ENCODE measurements at regions of chr15 and their contacts with region 1.

Region 1: DNA sequence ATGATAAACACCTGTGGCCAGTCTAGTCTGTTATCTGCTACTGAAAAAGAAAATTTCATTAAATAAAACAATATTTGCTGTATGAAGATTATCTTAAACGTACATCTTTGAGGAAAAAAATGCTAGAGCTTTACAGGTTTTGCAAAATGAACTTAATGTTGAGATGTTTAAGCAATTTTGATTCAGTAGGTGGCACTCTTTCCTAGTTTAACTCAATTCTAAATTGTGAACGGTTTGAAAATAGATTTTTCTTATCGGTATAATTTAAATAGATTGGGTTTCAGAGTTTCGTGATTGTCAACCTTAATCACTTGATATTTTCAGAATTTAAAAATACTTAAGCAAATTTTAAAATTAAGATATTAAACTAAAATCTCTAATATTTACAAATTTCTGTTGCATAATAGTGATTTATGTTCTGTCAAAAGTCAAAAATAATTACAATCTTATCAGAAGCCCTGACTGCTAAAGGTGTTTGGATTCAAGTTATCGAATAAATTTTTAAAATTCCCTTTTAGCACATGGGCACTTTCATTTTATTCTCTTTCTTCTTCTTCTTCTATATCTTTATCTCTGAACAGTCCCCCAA is 7.0 kb upstream of the RNF111 start:
- DNase-seq: no peak
- H3K4me3 Mint-ChIP-seq: no peak overlapping the region
- H3K27ac Mint-ChIP-seq: no peak overlapping the region
- H3K4me1 Mint-ChIP-seq: peaks cover 9% of the 10 kb centered on the region
- H3K27me3 Mint-ChIP-seq: no peaks in the 10 kb centered on the region
- CTCF ChIP-seq: peak; percentile 17

Region 2: DNA sequence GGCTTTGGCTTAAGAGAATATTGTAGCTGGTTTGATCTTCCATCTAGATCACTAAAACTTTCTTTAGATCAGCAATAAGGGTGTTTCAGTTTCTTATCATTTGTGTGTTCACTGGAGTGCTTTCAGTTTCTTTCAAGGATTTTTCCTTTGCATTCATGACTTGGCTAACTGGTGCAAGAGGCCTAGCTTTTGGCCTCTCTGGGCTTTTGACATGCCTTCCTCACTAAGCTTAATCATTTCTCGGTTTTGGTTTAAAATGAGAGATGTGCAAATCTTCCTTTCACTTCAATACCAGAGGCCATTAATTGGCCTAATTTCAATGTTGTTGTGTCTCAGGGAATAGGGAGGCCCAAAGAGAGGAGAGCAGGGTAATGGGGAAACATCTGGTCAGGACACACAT is 94.2 kb after region 1 on chr15:
- CTCF ChIA-PET with region 1: no interaction called
- intact Hi-C with region 1: no loop called
- DNase-seq: no peak
- H3K4me3 Mint-ChIP-seq: no peak overlapping the region
- H3K27ac Mint-ChIP-seq: no peak overlapping the region
- H3K4me1 Mint-ChIP-seq: no peaks in the 10 kb centered on the region
- H3K27me3 Mint-ChIP-seq: no peaks in the 10 kb centered on the region
- CTCF ChIP-seq: no peak

Region 3: DNA sequence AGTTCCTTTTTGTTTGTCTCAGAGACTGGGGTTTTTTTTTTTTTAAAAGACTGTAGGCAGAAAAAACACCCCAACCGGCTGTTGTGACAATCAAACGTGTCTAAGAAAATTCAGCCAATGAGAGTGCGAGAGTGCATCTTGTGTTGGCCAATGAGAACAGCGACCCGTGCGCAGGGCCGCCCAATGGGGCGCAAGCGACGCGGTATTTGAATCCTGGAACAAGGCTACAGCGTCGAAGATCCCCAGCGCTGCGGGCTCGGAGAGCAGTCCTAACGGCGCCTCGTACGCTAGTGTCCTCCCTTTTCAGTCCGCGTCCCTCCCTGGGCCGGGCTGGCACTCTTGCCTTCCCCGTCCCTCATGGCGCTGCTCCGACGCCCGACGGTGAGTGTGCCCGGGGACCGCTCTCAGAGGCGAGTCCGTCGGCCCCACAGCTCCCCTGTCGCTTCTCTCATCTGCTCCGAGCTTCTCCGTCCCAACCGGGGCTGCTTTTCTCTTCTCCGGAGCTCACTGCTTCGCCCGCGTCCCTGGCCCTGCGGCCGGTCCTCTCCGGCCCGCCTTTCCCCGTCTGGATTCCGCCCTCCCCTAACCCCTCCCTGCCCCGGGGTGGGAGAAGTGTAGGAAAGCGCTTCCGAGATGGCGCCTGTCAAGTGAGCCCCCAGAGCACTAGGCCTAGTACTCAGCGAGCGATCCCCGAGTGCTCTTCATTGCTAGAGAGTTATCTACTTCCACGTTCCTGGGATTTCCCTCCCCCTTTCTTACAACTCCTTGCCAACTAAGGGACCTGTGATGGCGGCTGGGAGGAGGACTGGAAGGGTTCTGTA is 124.7 kb after region 1 on chr15 and contains the start of gene CCNB2:
- CTCF ChIA-PET with region 1: no interaction called
- intact Hi-C with region 1: loop called (anchors 2 kb)
- DNase-seq: peak; percentile 90
- H3K4me3 Mint-ChIP-seq: peak within 1 kb of the TSS; percentile 100
- H3K27ac Mint-ChIP-seq: peak within 1 kb of the TSS; percentile 73
- H3K4me1 Mint-ChIP-seq: peaks cover 26% of the 10 kb centered on the region
- H3K27me3 Mint-ChIP-seq: no peaks in the 10 kb centered on the region
- CTCF ChIP-seq: no peak
- total RNA-seq, gene CCNB2: 72.5 and 86.4 TPM in 2 replicates

Region 4: DNA sequence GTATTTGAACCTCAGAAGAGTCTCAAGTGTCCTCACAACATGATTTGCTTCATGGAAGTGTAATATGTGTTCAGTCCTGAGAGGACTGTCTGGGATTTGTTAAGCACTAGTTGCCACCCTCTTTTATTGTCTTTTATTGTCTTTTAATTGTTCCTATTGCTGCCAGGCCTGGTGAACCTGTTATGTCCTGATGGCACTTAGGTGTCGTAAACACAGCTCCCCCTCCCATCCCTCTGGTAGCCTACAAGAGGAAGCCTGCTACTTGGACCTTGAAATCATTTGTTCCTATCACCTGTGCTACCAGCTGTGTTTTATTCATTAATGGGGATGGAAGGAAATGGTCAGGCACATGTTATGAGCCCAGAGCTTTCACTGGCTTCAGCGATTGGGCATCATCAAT is 143.8 kb after region 1 on chr15:
- CTCF ChIA-PET with region 1: no interaction called
- intact Hi-C with region 1: loop called (anchors 2 kb)
- DNase-seq: no peak
- H3K4me3 Mint-ChIP-seq: no peak overlapping the region
- H3K27ac Mint-ChIP-seq: peak overlapping the region; percentile 63
- H3K4me1 Mint-ChIP-seq: peaks cover 8% of the 10 kb centered on the region
- H3K27me3 Mint-ChIP-seq: no peaks in the 10 kb centered on the region
- CTCF ChIP-seq: no peak

Region 5: GRCh38 chr15:59501597-59501996 is 521.2 kb after region 1 on chr15:
- CTCF ChIA-PET with region 1: no interaction called
- intact Hi-C with region 1: loop called (anchors 1 kb)
- DNase-seq: peak; percentile 76
- H3K4me3 Mint-ChIP-seq: no peak overlapping the region
- H3K27ac Mint-ChIP-seq: no peak overlapping the region
- H3K4me1 Mint-ChIP-seq: no peaks in the 10 kb centered on the region
- H3K27me3 Mint-ChIP-seq: no peaks in the 10 kb centered on the region
- CTCF ChIP-seq: peak; percentile 84